ENCODE measurements at regions of chr15 and their contacts with region 1.

Region 1: DNA sequence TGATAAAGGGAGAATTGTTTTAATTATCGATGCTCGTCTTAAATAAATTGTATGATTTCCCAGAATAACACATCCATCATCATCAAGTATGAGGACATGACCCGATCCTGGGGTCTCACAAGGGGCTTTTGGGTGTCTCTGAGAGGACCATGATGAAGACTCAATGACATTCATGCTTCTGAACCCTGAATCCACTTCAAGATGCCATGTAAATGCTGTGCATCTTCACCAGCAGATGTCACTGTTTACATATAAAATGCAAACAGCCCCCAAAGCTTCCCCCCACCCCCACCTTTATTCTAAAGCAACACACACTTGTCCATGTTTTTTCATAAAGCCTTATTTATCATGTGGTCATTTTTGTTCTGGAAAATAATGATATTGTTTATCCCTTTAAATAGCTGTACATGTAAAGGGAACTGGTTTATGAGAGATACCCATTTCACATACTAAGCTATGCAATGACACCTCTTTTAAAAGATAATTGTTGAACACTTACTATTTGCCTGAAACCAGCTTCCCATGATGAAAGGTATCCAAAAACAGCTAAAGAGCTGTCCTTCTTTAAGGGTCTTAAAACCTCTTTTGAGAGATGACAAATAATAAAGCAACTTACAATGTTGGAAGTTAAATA is 69.7 kb upstream of the UBE3A start:
- DNase-seq: peak; percentile 40
- ATAC-seq: no peak
- H3K4me3 ChIP-seq: no peak overlapping the region
- H3K4me3 Mint-ChIP-seq: no peak overlapping the region
- H3K27ac ChIP-seq: no peak overlapping the region
- H3K27ac Mint-ChIP-seq: no peak overlapping the region
- H3K4me1 ChIP-seq: no peaks in the 10 kb centered on the region
- H3K4me1 Mint-ChIP-seq: no peaks in the 10 kb centered on the region
- H3K27me3 ChIP-seq: no peaks in the 10 kb centered on the region
- H3K27me3 Mint-ChIP-seq: no peaks in the 10 kb centered on the region
- CTCF ChIP-seq: peak; percentile 56

Region 2: GRCh38 chr15:25465835-25466234 is 42.7 kb before region 1 on chr15:
- CTCF ChIA-PET with region 1: no interaction called
- POLR2A ChIA-PET with region 1: no interaction called
- intact Hi-C with region 1: no loop called
- DNase-seq: no peak
- ATAC-seq: no peak
- H3K4me3 ChIP-seq: no peak overlapping the region
- H3K4me3 Mint-ChIP-seq: no peak overlapping the region
- H3K27ac ChIP-seq: no peak overlapping the region
- H3K27ac Mint-ChIP-seq: no peak overlapping the region
- H3K4me1 ChIP-seq: no peaks in the 10 kb centered on the region
- H3K4me1 Mint-ChIP-seq: no peaks in the 10 kb centered on the region
- H3K27me3 ChIP-seq: no peaks in the 10 kb centered on the region
- H3K27me3 Mint-ChIP-seq: no peaks in the 10 kb centered on the region
- CTCF ChIP-seq: no peak

Region 3: GRCh38 chr15:25486051-25486450 is 22.4 kb before region 1 on chr15:
- CTCF ChIA-PET with region 1: no interaction called
- POLR2A ChIA-PET with region 1: no interaction called
- intact Hi-C with region 1: no loop called
- DNase-seq: no peak
- ATAC-seq: no peak
- H3K4me3 ChIP-seq: no peak overlapping the region
- H3K4me3 Mint-ChIP-seq: no peak overlapping the region
- H3K27ac ChIP-seq: no peak overlapping the region
- H3K27ac Mint-ChIP-seq: no peak overlapping the region
- H3K4me1 ChIP-seq: no peaks in the 10 kb centered on the region
- H3K4me1 Mint-ChIP-seq: no peaks in the 10 kb centered on the region
- H3K27me3 ChIP-seq: no peaks in the 10 kb centered on the region
- H3K27me3 Mint-ChIP-seq: no peaks in the 10 kb centered on the region
- CTCF ChIP-seq: no peak

Region 4: GRCh38 chr15:26260517-26261133 is 752.1 kb after region 1 on chr15:
- CTCF ChIA-PET with region 1: interaction called, 23 read pairs
- POLR2A ChIA-PET with region 1: no interaction called
- intact Hi-C with region 1: no loop called
- DNase-seq: peak; percentile 49
- ATAC-seq: no peak
- H3K4me3 ChIP-seq: no peak overlapping the region
- H3K4me3 Mint-ChIP-seq: no peak overlapping the region
- H3K27ac ChIP-seq: no peak overlapping the region
- H3K27ac Mint-ChIP-seq: no peak overlapping the region
- H3K4me1 ChIP-seq: no peaks in the 10 kb centered on the region
- H3K4me1 Mint-ChIP-seq: no peaks in the 10 kb centered on the region
- H3K27me3 ChIP-seq: peaks cover 0 to 5% (median 0%) of the 10 kb centered on the region in 4 experiments
- H3K27me3 Mint-ChIP-seq: no peaks in the 10 kb centered on the region
- CTCF ChIP-seq: peak; percentile 77

Region 5: GRCh38 chr15:26864664-26865191 is 1356.2 kb after region 1 on chr15:
- CTCF ChIA-PET with region 1: no interaction called
- POLR2A ChIA-PET with region 1: no interaction called
- intact Hi-C with region 1: loop called (anchors 5 kb)
- DNase-seq: no peak
- ATAC-seq: no peak
- H3K4me3 ChIP-seq: no peak overlapping the region
- H3K4me3 Mint-ChIP-seq: no peak overlapping the region
- H3K27ac ChIP-seq: no peak overlapping the region
- H3K27ac Mint-ChIP-seq: no peak overlapping the region
- H3K4me1 ChIP-seq: no peaks in the 10 kb centered on the region
- H3K4me1 Mint-ChIP-seq: no peaks in the 10 kb centered on the region
- H3K27me3 ChIP-seq: peaks cover 0 to 10% (median 0%) of the 10 kb centered on the region in 4 experiments
- H3K27me3 Mint-ChIP-seq: peaks cover 22% of the 10 kb centered on the region
- CTCF ChIP-seq: no peak

Measured in B cell (primary cell).